HEK293 (cell line): ENCODE measurements at regions of chr7 and their contacts with region 1.

Region 1: DNA sequence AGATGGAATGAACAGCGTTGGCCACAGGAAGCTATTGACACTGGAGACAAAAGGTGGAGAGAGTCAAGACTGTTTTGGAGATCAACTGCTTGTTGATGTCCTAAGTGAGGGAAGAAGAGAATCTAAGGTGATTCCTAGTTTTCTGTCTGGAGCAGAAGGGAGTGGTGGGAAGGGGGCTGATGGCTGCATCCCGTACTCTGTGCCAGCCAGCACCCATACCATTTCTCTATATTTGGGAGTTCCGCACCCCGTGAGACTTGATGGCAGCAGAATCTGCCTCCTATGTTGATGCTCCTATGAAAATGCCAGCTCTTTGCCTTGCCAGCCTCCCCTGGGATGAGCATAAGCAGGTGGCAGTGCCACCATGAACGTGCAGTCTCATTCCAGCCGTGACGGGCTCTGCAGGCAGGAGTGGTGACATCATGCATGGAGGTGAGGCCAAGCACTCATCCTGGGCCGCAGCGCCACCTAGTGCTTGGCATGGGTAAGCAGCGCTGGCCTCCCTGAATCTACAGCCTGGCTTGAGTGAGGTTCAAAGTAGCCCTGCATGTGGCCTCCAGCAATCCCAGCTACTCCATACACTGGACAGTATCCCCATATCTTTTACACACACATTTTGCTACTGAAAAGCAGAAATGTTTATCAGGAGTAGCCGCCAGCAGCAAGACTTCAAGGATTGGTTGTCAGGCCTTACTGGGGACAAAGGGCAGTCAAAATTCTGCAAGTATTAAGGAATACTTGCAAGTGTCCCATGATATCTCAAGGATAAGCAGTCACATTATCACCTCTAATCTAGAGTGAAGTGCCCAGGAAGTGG is 43.0 kb downstream of the PODXL start:
- H3K4me3 ChIP-seq: no peak overlapping the region
- H3K27ac ChIP-seq: no peak overlapping the region
- H3K4me1 ChIP-seq: no peaks in the 10 kb centered on the region
- CTCF ChIP-seq: peak; percentile 89

Region 2: GRCh38 chr7:131546583-131547111 is 33.2 kb after region 1 on chr7:
- CTCF ChIA-PET with region 1: interaction called, 54 read pairs
- POLR2A ChIA-PET with region 1: no interaction called
- H3K4me3 ChIP-seq: no peak overlapping the region
- H3K27ac ChIP-seq: no peak overlapping the region
- H3K4me1 ChIP-seq: no peaks in the 10 kb centered on the region
- CTCF ChIP-seq: peak; percentile 68